A549 (cell line): ENCODE measurements at regions of chr5 and their contacts with region 1.

Region 1: DNA sequence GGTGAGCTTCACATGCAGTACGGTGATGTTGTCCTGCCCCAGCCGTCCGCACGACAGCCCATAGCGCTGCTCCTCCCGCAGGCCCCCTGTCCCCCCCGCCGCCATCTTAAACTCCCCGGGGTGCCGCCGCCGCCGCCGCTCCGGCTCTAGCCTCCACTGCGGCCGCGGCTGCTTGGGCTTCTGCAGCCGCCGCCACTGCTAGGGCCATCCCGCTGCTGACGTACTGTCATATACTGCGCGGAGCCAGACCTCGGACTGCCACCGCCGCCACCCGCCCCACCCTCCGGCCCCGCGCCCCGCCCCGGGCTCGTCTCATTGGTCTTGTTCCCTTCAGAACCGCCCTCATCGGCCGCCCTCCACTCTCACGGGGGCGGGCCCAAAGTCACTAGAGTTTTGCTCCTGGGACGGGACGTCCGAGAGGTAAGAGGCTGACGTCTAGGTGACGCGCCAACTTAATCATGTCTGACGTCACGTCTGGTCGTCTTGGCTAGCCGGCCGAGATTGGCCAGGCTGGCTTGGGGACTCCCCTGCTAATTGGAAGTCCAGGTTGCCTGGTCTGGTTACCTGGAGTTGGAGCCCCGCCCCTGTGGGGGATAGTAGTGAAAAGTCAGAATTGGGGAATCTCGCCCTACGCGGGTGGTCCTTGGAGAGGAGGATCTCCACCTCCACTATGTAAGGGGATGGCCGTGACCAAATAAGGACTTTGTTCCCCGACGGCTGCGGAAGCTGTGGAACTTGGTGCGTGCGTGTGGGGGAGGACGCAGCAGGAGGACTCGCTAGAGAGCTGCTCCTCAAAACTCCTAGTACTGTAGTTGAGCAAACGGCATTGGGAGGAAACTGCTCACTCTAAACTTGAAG is at the start of gene ELL2:
- DNase-seq: peak; percentile 96 to 100
- ATAC-seq: peak; percentile 88 to 90
- H3K4me3 ChIP-seq: peak within 1 kb of the TSS; percentile 67
- H3K27ac ChIP-seq: peak within 1 kb of the TSS; percentile 89 to 95
- H3K4me1 ChIP-seq: peaks cover 52% of the 10 kb centered on the region
- CTCF ChIP-seq: no peak
- EP300 ChIP-seq: 0 out of 5 replicates have a peak, but pooled peaks of 1 of the 2 experiments have one; percentile 12
- POLR2A ChIP-seq: peak; percentile 50; the same call in 1 of the 2 replicates
- RAD21 ChIP-seq: no peak
- polyA plus RNA-seq, gene ELL2: 23.8 and 24.2 TPM in 2 replicates

Region 2: GRCh38 chr5:95940758-95941682 is 20.8 kb before region 1 on chr5:
- CTCF ChIA-PET with region 1: interaction called, 27 read pairs
- POLR2A ChIA-PET with region 1: no interaction called
- DNase-seq: no peak
- ATAC-seq: no peak; a peak in 1 of 6 replicates
- H3K4me3 ChIP-seq: no peak overlapping the region
- H3K27ac ChIP-seq: no peak overlapping the region
- H3K4me1 ChIP-seq: no peaks in the 10 kb centered on the region; the same call in 2 of the 3 replicates
- CTCF ChIP-seq: no peak
- EP300 ChIP-seq: no peak
- POLR2A ChIP-seq: no peak
- RAD21 ChIP-seq: no peak

Region 3: DNA sequence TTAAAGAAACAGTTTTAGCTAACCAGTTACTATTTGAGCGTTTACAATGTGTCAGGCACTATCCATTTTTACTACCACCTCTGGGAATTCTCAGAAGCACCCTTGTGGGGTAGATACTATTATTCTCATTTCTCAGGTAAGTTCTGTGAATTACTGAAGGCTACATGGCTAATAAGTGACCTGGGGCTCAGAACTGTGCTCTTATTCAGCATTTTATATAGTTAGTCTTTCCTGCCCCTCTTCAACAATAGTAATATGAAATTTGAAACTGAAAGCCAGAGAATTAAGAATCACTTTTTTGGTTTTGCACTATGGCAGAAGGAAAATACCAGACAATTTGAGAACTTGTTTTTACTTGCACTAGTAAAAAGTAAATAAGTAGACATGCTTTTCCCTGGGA is 12.0 kb before region 1 on chr5:
- CTCF ChIA-PET with region 1: interaction called, 27 read pairs
- POLR2A ChIA-PET with region 1: interaction called, 3 read pairs
- DNase-seq: no peak
- ATAC-seq: no peak
- H3K4me3 ChIP-seq: no peak overlapping the region
- H3K27ac ChIP-seq: no peak overlapping the region
- H3K4me1 ChIP-seq: peaks cover 9% of the 10 kb centered on the region
- CTCF ChIP-seq: no peak
- EP300 ChIP-seq: no peak
- POLR2A ChIP-seq: no peak
- RAD21 ChIP-seq: no peak

Region 4: GRCh38 chr5:96329886-96330529 is 368.2 kb after region 1 on chr5:
- CTCF ChIA-PET with region 1: interaction called, 76 read pairs
- POLR2A ChIA-PET with region 1: interaction called, 3 read pairs
- DNase-seq: no peak
- ATAC-seq: no peak
- H3K4me3 ChIP-seq: no peak overlapping the region
- H3K27ac ChIP-seq: peak overlapping the region; percentile 16 to 55; a peak in 1 of 6 replicates
- H3K4me1 ChIP-seq: peaks cover 29% of the 10 kb centered on the region
- CTCF ChIP-seq: no peak
- EP300 ChIP-seq: no peak
- POLR2A ChIP-seq: no peak
- RAD21 ChIP-seq: no peak